ENCODE measurements at regions of chr19 and their contacts with region 1.

Region 1: DNA sequence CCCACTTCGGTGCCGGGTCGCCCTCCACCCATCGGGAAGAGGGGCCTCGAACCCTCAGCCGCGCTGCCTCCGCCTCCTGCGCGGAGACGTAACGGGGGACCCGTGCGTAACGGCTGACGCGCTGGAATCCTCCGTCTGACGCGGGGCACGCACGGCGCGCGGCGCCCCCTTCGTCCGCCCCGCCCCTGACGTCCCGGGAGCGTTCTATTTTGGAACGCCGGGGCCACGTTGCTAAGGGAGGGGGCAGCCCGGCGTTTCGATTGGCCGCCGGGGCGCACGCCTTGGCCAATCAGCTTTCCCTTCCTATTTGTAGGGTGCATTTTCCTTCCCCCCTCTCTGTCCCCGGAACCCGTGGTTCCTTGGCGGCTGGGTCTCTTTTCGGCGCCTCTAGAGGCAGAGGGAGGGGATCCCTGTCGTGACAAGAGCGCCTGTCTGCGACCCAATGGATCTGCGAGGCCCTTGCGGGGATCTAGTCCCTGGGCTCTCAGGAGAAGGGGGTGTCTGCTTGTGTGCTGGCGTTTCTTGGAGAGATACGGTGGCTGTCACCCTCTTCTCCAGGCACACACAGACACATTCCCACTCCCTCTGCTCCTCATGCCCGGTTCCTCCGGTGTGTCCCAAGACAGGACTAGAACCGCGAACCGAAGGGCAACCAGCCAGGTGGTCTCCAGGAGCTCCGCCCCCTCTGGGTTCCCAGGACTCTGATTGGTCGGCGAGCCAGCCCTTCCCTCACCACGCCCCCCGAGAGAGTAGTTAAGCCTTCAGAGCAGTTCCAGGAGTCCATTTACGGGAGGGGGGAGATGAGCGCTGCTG is 1.5 kb downstream of the FOSB start:
- DNase-seq: peak; percentile 92
- ATAC-seq: peak; percentile 52
- H3K4me3 Mint-ChIP-seq: peak overlapping the region; percentile 92
- H3K27ac Mint-ChIP-seq: peak overlapping the region; percentile 98
- H3K4me1 Mint-ChIP-seq: peaks cover 57% of the 10 kb centered on the region
- H3K27me3 Mint-ChIP-seq: peaks cover 16% of the 10 kb centered on the region
- CTCF ChIP-seq: no peak

Region 2: DNA sequence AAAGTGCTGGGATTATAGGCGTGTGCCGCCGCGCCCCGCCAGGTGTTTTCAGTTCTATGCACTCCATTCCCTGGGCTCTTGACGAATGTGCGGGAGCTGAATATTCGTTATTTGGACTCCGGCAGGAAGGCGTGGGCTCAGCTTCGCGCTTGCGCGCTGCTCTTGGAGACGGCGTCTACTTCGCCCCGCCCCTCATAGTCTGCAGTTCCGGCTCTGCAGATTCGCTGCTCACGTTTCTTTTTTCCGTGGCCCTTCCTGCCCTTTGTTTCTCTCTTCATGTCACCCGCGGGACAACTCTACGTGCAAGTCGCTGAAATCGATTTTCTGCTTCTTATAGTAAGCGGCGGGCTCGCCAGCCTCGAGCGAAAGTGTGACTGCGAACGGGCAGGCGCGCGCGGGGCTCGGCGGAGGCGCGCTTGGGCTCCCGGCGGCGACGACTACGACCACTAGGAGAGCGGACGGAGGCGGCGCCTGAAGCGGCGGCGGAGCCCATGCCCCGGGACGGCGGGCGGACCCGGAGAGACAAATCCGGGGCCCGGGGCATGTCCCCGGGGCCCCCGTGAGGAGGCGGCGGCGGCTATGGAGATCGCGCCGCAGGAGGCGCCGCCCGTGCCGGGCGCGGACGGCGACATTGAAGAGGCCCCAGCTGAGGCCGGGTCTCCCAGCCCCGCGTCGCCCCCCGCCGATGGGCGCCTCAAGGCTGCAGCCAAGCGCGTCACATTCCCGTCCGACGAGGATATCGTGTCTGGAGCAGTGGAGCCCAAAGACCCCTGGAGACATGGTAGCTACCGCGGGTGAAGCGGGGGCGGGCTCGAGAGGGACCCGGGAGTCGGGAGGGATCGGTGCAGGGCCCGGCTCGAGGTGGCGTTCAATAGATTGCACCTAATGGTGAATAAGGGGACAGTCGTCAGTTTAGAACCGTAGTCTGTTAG is 376.3 kb before region 1 on chr19 and contains the start of gene PPP1R37:
- CTCF ChIA-PET with region 1: no interaction called
- POLR2A ChIA-PET with region 1: no interaction called
- intact Hi-C with region 1: no loop called
- DNase-seq: peak; percentile 81
- ATAC-seq: peak; percentile 69
- H3K4me3 Mint-ChIP-seq: peak within 1 kb of the TSS; percentile 93
- H3K27ac Mint-ChIP-seq: peak within 1 kb of the TSS; percentile 99
- H3K4me1 Mint-ChIP-seq: peaks cover 54% of the 10 kb centered on the region
- H3K27me3 Mint-ChIP-seq: no peaks in the 10 kb centered on the region
- CTCF ChIP-seq: no peak
- total RNA-seq, gene PPP1R37: 18.8 and 27.2 TPM in 2 replicates

Region 3: DNA sequence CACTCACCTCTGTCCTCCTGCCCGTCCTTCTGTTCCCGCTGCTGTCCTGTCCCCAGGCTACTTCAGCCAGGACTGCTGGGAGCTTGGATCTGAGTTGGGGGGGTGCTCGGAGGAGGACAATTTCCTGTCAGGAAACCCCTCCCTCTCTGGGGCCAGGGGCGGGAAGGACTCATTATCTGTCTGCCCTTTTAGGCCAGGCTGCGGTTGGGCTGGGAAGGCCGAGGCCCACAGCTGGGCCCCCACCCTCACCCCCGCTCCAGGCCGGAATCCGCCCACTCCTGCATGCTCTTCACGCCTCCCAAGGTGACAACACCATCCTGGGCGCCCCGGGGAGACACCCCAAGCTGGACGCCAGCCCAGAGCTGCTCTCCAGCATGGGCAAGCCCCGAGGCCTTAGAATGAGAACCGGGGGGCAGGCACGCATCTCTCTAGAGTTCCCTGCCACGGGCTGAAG is 224.0 kb before region 1 on chr19 and contains the start of gene EXOC3L2:
- CTCF ChIA-PET with region 1: no interaction called
- POLR2A ChIA-PET with region 1: no interaction called
- intact Hi-C with region 1: no loop called
- DNase-seq: no peak
- ATAC-seq: no peak
- H3K4me3 Mint-ChIP-seq: no peak within 1 kb of the TSS
- H3K27ac Mint-ChIP-seq: no peak within 1 kb of the TSS
- H3K4me1 Mint-ChIP-seq: peaks cover 6% of the 10 kb centered on the region
- H3K27me3 Mint-ChIP-seq: peaks cover 15% of the 10 kb centered on the region
- CTCF ChIP-seq: no peak
- total RNA-seq, gene EXOC3L2: not detected in 2 replicates

Region 4: GRCh38 chr19:45370410-45371204 is 98.7 kb before region 1 on chr19 and contains the start of gene ERCC2:
- CTCF ChIA-PET with region 1: no interaction called
- POLR2A ChIA-PET with region 1: no interaction called
- intact Hi-C with region 1: loop called (anchors 1 kb)
- DNase-seq: peak; percentile 98
- ATAC-seq: peak; percentile 97
- H3K4me3 Mint-ChIP-seq: peak within 1 kb of the TSS; percentile 95
- H3K27ac Mint-ChIP-seq: peak within 1 kb of the TSS; percentile 99
- H3K4me1 Mint-ChIP-seq: peaks cover 14% of the 10 kb centered on the region
- H3K27me3 Mint-ChIP-seq: no peaks in the 10 kb centered on the region
- CTCF ChIP-seq: no peak
- total RNA-seq, gene ERCC2: 29.8 and 31.5 TPM in 2 replicates

Region 5: DNA sequence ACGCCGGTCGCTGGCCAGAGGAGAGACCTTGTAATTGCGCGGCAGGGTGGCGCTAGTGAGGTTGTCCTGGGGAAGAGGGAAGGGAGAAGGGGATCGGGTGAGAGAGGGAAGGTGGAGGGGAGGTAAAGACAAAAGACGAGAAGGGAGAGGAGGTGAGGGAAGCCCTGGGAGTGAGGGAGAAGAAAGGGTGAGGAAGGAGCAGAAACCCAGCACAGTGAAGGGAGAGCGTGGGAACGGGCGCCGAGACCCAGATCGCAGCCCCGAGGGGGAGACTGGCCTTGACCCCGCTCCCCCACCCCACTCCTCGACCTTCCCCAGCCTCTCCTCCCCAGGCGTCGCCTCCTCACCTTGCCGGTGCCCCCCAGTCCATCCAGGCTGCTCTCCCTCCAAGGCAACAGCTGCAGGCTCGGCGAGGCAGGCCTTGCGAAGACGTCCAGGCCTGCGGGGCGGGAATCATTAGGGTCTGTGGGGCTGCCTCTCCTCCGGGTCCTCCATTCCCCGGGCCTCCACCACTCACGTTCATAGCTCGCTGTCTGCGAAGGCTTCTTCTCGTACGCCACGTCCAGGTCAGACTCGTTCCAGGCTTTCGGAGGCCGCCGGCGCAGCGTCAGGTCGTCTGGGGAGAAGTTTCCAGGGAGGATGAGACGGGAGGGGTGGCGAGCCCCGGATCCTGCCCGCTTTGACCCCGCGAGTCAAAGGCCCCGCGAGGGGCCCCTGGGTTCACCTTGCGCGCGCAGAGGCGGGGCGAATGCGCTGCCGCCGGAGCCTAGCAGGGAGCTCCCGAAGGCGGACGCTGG is 73.3 kb before region 1 on chr19:
- CTCF ChIA-PET with region 1: no interaction called
- POLR2A ChIA-PET with region 1: no interaction called
- intact Hi-C with region 1: no loop called
- DNase-seq: no peak
- ATAC-seq: no peak
- H3K4me3 Mint-ChIP-seq: no peak overlapping the region
- H3K27ac Mint-ChIP-seq: no peak overlapping the region
- H3K4me1 Mint-ChIP-seq: peaks cover 11% of the 10 kb centered on the region
- H3K27me3 Mint-ChIP-seq: peaks cover 18% of the 10 kb centered on the region
- CTCF ChIP-seq: no peak

Region 6: DNA sequence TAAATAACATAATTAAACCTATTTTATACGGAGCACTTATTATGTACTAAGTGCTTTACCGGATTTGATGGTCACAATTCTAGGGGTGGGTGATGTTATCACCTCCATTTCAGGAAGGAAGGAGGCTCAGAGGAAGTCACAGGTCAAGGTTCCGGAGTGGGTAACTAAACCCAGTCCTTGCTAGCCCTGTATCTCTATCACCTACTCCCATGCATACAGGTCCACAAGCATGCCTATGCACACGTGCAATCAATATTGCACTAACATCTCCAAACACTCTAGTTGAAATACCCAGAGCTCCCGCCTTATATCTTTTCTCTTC is 19.4 kb before region 1 on chr19:
- CTCF ChIA-PET with region 1: no interaction called
- POLR2A ChIA-PET with region 1: interaction called, 34 read pairs
- intact Hi-C with region 1: loop called (anchors 1 kb)
- DNase-seq: no peak
- ATAC-seq: peak; percentile 11
- H3K4me3 Mint-ChIP-seq: peak overlapping the region; percentile 92
- H3K27ac Mint-ChIP-seq: peak overlapping the region; percentile 97
- H3K4me1 Mint-ChIP-seq: peaks cover 52% of the 10 kb centered on the region
- H3K27me3 Mint-ChIP-seq: no peaks in the 10 kb centered on the region
- CTCF ChIP-seq: no peak

Region 7: DNA sequence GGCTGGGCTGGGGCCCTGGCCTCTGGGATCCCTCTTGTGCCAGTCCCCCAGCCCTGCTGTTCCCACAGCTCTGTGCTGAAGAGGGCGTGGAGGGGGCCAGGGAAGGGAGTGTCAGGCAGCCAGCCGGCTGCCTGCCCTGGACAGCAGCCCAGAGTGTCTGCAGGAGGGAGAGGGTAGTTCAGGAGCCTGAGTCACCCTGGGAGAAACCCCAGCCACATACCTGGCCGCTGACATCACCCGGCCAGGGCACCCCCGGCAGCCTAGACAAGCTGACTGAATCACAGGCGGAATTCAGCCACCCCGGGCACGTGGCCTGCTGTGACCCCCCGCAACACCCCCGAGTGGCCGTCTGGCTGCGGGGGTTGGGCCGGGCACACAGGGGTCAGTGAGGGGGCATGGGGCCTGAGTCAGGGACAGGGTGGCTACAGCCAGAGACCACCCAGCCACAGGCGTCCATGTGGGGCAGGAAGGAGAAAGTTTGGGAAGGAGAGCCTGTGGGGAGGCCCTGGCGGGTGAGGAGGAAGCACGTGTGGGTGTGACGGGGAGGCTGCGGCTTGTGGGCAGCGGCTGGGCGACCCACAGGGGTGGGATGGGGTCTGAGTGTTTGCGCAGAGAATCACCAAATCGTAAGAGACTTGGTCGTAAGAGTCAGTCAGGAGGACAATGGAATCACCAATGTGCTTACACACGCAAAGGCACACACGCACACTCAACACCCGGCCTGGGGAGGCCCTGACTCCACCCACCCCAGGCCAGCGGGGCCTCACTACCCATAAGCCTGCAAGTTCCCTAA is 13.4 kb before region 1 on chr19:
- CTCF ChIA-PET with region 1: no interaction called
- POLR2A ChIA-PET with region 1: interaction called, 34 read pairs
- intact Hi-C with region 1: loop called (anchors 1 kb)
- DNase-seq: peak; percentile 69
- ATAC-seq: peak; percentile 59
- H3K4me3 Mint-ChIP-seq: peak overlapping the region; percentile 67
- H3K27ac Mint-ChIP-seq: peak overlapping the region; percentile 80
- H3K4me1 Mint-ChIP-seq: peaks cover 44% of the 10 kb centered on the region
- H3K27me3 Mint-ChIP-seq: no peaks in the 10 kb centered on the region
- CTCF ChIP-seq: no peak

Region 8: DNA sequence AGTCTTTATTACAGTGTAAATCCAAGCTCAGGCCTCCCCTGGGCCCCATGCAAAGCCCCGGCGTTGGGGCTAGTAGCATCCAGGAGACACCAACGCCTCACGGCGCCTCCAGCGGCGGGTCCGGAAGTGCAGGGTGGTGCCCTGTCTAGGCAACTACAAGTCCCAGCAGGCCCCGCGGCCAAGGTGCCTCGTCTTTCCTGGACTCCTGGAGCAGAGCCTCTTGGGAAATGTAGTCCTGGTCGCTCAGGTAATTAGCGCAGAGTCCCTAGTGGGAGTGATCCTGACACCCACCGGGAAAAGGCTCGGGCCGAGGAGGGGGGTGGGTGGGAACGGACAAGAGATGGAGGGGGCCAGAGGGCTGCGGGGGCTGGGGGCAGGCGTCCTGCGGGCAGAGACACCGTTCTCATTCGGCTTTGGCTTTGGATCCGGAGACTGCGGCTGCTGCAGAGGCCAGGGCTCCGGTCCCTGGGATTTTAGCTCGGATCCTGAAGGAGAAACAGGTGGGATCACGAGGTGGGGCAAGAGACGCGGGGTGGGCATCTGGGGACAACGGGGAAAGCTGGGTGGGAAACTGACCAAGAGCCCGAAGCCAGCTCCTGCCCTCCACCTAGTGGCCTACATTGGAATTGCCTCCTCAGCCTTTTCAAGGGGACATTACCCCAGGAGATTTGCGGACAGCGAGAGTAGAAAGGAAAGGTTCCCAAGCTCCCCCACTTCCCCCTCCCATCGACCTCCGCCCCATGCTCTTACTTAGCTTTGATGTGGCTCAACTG is 16.2 kb after region 1 on chr19:
- CTCF ChIA-PET with region 1: interaction called, 8 read pairs
- POLR2A ChIA-PET with region 1: interaction called, 10 read pairs
- intact Hi-C with region 1: no loop called
- DNase-seq: peak; percentile 96
- ATAC-seq: peak; percentile 99
- H3K4me3 Mint-ChIP-seq: peak overlapping the region; percentile 91
- H3K27ac Mint-ChIP-seq: peak overlapping the region; percentile 74
- H3K4me1 Mint-ChIP-seq: peaks cover 8% of the 10 kb centered on the region
- H3K27me3 Mint-ChIP-seq: peaks cover 3% of the 10 kb centered on the region
- CTCF ChIP-seq: peak; percentile 84